ENCODE measurements at regions of chr6 and their contacts with region 1.

Region 1: GRCh38 chr6:159862103-159862502 is 28.7 kb upstream of the MAS1 start:
- DNase-seq: no peak
- ATAC-seq: peak; percentile 19
- H3K4me3 Mint-ChIP-seq: no peak overlapping the region
- H3K27ac Mint-ChIP-seq: peak overlapping the region; percentile 0
- H3K4me1 Mint-ChIP-seq: peaks cover 15% of the 10 kb centered on the region
- H3K27me3 Mint-ChIP-seq: peaks cover 2% of the 10 kb centered on the region

Region 2: GRCh38 chr6:159789377-159790148 is 72.5 kb before region 1 on chr6 and contains the start of gene TCP1:
- CTCF ChIA-PET with region 1: no interaction called
- POLR2A ChIA-PET with region 1: no interaction called
- intact Hi-C with region 1: no loop called
- DNase-seq: peak; percentile 100
- ATAC-seq: peak; percentile 89
- H3K4me3 Mint-ChIP-seq: peak within 1 kb of the TSS; percentile 86
- H3K27ac Mint-ChIP-seq: peak within 1 kb of the TSS; percentile 99
- H3K4me1 Mint-ChIP-seq: peaks cover 62% of the 10 kb centered on the region
- H3K27me3 Mint-ChIP-seq: no peaks in the 10 kb centered on the region
- total RNA-seq, gene TCP1: 358 to 496 TPM

Region 3: GRCh38 chr6:159941286-159942113 is 79.4 kb after region 1 on chr6:
- CTCF ChIA-PET with region 1: interaction called, 11 read pairs
- POLR2A ChIA-PET with region 1: no interaction called
- intact Hi-C with region 1: loop called (anchors 1 kb)
- DNase-seq: peak; percentile 50
- ATAC-seq: peak; percentile 97
- H3K4me3 Mint-ChIP-seq: no peak overlapping the region
- H3K27ac Mint-ChIP-seq: no peak overlapping the region
- H3K4me1 Mint-ChIP-seq: peaks cover 2% of the 10 kb centered on the region
- H3K27me3 Mint-ChIP-seq: no peaks in the 10 kb centered on the region

Region 4: DNA sequence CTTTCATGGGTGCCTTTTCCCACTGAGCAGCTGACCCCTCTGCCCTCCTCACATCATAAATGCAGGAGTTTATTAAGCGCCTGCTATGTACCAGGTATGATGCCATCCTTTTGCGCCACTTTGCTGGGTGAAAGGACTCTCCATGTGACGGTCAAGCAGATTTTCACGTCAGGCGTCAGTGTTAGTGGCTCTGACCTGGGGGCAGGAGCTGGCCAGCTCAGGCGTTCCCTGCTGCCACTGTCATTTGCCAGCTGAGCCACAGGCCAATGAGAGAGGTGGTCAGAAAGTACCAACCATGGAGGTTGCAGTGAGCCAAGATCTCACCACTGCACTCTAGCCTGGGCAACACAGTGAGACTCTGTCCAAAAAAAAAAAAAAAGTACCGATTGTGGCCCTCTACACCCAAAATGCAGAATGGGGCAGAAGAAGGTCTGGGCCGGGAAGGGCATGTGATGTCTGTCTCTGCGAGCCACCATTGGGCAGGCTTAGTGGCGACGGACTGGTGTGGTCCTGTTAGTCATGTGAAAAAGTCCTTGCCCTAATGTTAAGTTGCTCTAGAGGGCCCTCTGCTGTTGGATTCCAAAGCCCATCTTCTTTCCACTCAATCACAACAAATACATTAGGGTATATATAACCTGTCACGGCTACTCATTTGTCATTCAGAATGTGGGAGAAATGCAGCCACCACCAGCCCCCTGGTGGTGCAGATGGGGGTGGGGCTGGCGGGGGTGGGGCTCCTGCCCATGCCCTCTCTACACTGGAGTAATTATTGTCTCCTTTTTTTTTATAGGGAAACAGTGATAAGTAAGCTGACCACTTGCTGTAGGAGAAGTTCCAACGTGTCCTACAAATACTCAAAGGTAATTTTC is 241.1 kb after region 1 on chr6:
- CTCF ChIA-PET with region 1: interaction called, 4 read pairs
- POLR2A ChIA-PET with region 1: no interaction called
- intact Hi-C with region 1: loop called (anchors 2 kb)
- DNase-seq: peak; percentile 51
- ATAC-seq: peak; percentile 60
- H3K4me3 Mint-ChIP-seq: no peak overlapping the region
- H3K27ac Mint-ChIP-seq: no peak overlapping the region
- H3K4me1 Mint-ChIP-seq: peaks cover 12% of the 10 kb centered on the region
- H3K27me3 Mint-ChIP-seq: no peaks in the 10 kb centered on the region